CD8-positive, alpha-beta memory T cell (primary cell): ENCODE measurements at regions of chr19 and their contacts with region 1.

Region 1: GRCh38 chr19:3660493-3661219 is 34.1 kb upstream of the CACTIN start:
- DNase-seq: no peak
- H3K4me3 ChIP-seq: no peak overlapping the region
- H3K4me3 Mint-ChIP-seq: no peak overlapping the region
- H3K27ac ChIP-seq: no peak overlapping the region
- H3K27ac Mint-ChIP-seq: no peak overlapping the region
- H3K4me1 ChIP-seq: no peaks in the 10 kb centered on the region
- H3K4me1 Mint-ChIP-seq: peaks cover 0 to under 1% (median 0%) of the 10 kb centered on the region in 3 donors
- H3K27me3 ChIP-seq: no peaks in the 10 kb centered on the region
- H3K27me3 Mint-ChIP-seq: no peaks in the 10 kb centered on the region

Region 2: DNA sequence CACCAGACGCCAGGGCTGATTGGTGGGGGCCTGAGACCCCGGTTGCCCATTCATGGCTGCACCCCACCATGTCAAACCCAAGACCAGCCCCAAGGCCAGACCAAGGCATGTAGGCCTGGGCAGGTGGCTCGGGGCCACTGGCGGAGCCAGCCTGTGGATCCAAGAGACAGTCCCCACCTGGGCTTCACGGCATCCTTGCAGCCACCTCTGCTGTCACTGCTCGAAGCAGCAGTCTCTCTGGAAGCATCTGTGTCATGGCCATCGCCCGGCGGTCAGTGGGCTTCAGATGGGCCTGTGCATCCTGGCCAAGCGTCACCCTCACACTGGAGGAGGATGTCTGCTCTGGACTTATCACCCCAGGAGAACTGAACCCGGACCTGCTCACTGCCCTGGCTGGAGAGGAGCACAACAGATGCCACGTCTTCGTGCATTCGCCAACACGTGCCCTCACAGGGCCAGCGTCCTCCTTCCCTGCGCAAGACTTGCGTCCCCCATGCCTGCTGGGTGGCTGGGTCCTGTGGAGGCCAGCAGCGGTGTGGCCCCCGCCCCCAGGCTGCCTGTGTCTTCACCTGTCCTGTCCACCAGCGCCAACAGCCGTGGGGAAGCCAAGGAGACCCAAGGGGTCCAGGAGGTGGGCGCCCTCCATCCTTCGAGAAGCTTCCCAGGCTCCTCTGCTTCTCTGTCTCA is 125.3 kb before region 1 on chr19:
- CTCF ChIA-PET with region 1: no interaction called
- POLR2A ChIA-PET with region 1: no interaction called
- DNase-seq: no peak
- H3K4me3 ChIP-seq: no peak overlapping the region
- H3K4me3 Mint-ChIP-seq: no peak overlapping the region
- H3K27ac ChIP-seq: no peak overlapping the region
- H3K27ac Mint-ChIP-seq: no peak overlapping the region
- H3K4me1 ChIP-seq: no peaks in the 10 kb centered on the region
- H3K4me1 Mint-ChIP-seq: peaks cover 0 to 1% (median 0%) of the 10 kb centered on the region in 3 donors
- H3K27me3 ChIP-seq: no peaks in the 10 kb centered on the region
- H3K27me3 Mint-ChIP-seq: no peaks in the 10 kb centered on the region

Region 3: DNA sequence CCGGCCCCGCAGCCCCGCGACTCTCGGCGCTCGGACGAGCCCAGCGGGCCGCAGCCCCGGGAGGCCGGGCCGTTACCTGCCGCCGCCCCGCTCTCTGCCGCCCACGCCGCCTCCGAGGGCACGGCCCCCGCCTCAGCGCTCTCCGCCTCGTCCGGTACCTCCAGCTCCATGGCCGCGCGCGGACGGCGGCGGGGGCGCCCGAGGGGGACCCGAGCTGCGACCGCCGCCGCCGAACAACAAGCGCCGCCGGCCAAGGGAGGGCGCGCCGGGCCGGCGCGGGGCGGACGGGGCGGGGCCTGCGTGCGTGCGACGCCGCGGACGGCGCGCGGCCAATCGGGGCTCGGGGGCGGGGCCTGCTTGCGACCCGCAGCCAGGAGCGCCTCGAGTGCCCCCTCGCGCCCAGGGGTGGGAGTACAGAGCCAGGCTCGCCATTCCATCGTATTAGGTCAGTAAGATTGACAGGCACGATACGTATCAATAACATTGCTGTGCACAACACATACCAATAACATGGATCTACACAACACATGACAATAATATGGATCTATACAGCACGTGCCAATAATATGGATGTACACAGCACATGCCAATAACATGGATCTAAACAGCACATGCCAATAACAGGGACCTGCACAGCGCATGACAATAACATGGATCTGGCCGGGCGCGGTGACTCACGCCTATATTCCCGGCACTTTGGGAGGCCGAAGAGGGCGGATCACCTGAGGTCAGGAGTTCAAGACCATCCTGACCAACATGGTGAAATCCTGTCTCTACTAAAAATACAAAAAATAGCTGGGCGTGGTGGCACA is 39.8 kb after region 1 on chr19 and contains the start of gene PIP5K1C:
- CTCF ChIA-PET with region 1: interaction called, 22 read pairs
- POLR2A ChIA-PET with region 1: no interaction called
- DNase-seq: peak; percentile 88 to 93 (median 90)
- H3K4me3 ChIP-seq: peak within 1 kb of the TSS; percentile 60
- H3K4me3 Mint-ChIP-seq: peak within 1 kb of the TSS; percentile 86 to 97 (median 89)
- H3K27ac ChIP-seq: peak within 1 kb of the TSS; percentile 48
- H3K27ac Mint-ChIP-seq: peak within 1 kb of the TSS; percentile 50 to 91 (median 76)
- H3K4me1 ChIP-seq: peaks cover 9% of the 10 kb centered on the region
- H3K4me1 Mint-ChIP-seq: peaks cover 12 to 44% (median 20%) of the 10 kb centered on the region in 3 donors
- H3K27me3 ChIP-seq: no peaks in the 10 kb centered on the region
- H3K27me3 Mint-ChIP-seq: peaks cover 0 to 2% of the 10 kb centered on the region in 2 donors
- total RNA-seq, gene PIP5K1C: 26.9 to 27.6 TPM

Region 4: GRCh38 chr19:3708208-3708931 is 47.7 kb after region 1 on chr19 and contains the start of gene TJP3:
- CTCF ChIA-PET with region 1: interaction called, 22 read pairs
- POLR2A ChIA-PET with region 1: no interaction called
- DNase-seq: no peak
- H3K4me3 ChIP-seq: no peak within 1 kb of the TSS
- H3K4me3 Mint-ChIP-seq: no peak within 1 kb of the TSS
- H3K27ac ChIP-seq: no peak within 1 kb of the TSS
- H3K27ac Mint-ChIP-seq: peak within 1 kb of the TSS in 1 of 8 donors; percentile 17
- H3K4me1 ChIP-seq: no peaks in the 10 kb centered on the region
- H3K4me1 Mint-ChIP-seq: peaks cover 1 to 7% (median 6%) of the 10 kb centered on the region in 3 donors
- H3K27me3 ChIP-seq: no peaks in the 10 kb centered on the region
- H3K27me3 Mint-ChIP-seq: peaks cover 10 to 13% of the 10 kb centered on the region in 2 donors
- total RNA-seq, gene TJP3: 1.5 to 1.7 TPM